Heart left ventricle (tissue), 16 donors: ENCODE measurements at regions of chr1 and their contacts with region 1.

Region 1: DNA sequence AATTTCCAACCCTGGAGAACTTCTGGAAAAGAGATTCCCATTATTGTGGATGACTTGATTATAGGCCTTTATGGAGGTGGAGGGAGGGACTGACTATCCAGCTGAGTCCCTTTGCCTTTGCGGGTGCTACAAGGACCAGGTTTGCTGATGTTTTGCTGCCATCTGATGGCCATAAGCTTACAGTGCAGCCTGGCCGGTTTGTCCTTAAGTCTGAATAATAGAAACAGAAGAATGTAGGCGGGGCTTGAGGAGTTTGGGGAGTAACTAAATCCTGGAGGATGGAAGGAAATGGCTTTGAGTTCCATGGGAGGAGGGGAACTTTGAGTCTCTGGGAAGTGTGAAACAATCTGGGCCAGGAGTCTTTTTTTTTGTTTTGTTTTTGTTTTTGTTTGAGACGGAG is 55.7 kb upstream of the CD1D start:
- DNase-seq: peak; percentile 80 to 89 (median 87)
- ATAC-seq: peak; percentile 93 to 98 (median 96)
- H3K4me3 ChIP-seq: peak overlapping the region in 1 of 12 donors; percentile 21
- H3K27ac ChIP-seq: no peak overlapping the region
- H3K4me1 ChIP-seq: peaks cover 0 to 4% (median 0%) of the 10 kb centered on the region in 12 donors
- H3K27me3 ChIP-seq: peaks cover 0 to 9% (median 0%) of the 10 kb centered on the region in 9 donors
- CTCF ChIP-seq: peak; percentile 83 to 98 (median 91)
- POLR2A ChIP-seq: no peak

Region 2: DNA sequence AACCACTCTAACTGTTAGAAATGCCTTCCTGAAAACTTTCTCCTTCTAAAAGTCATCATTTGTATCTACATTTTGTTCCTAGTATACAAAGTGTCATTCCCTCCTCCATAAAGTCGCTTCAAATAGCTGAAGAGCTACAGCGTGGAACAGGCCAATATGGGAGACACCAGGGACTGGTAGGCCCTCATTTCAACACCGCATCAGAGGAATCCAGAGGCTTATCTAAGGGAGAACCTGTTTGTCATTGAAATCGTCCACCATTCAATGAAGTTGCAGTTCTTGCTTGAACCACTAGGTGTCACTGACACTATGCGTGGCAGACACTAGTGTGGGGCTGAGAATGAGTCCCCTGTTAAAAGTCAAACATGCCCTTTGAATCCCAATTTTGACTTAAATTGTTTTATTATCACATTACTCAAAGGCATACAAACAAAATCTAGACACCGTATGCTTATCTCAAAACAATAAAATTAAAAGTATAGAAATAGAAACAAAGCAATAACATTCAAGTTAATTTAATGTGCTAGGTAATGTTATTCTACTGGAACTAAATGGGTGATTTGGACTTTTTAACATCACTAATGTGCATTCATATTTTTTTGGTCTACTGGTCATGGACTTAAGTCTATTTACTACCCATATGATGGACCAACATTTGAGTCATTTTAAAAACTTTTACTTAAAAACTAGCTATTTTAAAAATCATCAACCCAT is 755.0 kb before region 1 on chr1:
- intact Hi-C with region 1: loop called in 1 of 10 experiments (anchors 5 kb)
- DNase-seq: no peak
- ATAC-seq: peak in 2 of 4 donors; percentile 71 to 76
- H3K4me3 ChIP-seq: no peak overlapping the region
- H3K27ac ChIP-seq: no peak overlapping the region
- H3K4me1 ChIP-seq: no peaks in the 10 kb centered on the region
- H3K27me3 ChIP-seq: peaks cover 0 to 6% (median 0%) of the 10 kb centered on the region in 9 donors
- CTCF ChIP-seq: peak; percentile 80 to 94 (median 90)
- POLR2A ChIP-seq: no peak

Region 3: DNA sequence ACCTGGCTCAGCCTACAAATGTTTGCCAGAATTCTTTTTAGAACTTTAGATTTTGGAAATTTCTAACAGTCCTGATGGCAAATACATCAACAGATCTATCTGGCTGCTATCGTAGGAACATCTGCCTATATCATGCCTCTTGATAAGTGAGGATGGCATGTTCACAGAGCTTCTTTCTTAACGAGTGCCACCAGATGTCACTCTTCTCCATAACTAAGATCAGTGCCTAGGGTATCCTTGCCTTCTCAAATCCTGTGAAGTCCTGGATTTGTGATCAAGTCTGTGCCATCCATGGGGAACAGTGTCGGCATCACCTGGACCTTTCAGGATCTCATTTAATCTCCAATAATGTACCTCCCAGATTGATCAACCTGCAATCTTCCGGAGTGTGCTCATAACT is 246.9 kb before region 1 on chr1:
- intact Hi-C with region 1: loop called in 4 of 10 experiments (anchors 10 kb)
- DNase-seq: no peak
- ATAC-seq: peak in 2 of 4 donors; percentile 44 to 68
- H3K4me3 ChIP-seq: no peak overlapping the region
- H3K27ac ChIP-seq: no peak overlapping the region
- H3K4me1 ChIP-seq: peaks cover 0 to 15% (median 0%) of the 10 kb centered on the region in 12 donors
- H3K27me3 ChIP-seq: peaks cover 0 to 7% (median 0%) of the 10 kb centered on the region in 9 donors
- CTCF ChIP-seq: peak in 10 of 12 donors; percentile 33 to 56 (median 44)
- POLR2A ChIP-seq: no peak

Region 4: DNA sequence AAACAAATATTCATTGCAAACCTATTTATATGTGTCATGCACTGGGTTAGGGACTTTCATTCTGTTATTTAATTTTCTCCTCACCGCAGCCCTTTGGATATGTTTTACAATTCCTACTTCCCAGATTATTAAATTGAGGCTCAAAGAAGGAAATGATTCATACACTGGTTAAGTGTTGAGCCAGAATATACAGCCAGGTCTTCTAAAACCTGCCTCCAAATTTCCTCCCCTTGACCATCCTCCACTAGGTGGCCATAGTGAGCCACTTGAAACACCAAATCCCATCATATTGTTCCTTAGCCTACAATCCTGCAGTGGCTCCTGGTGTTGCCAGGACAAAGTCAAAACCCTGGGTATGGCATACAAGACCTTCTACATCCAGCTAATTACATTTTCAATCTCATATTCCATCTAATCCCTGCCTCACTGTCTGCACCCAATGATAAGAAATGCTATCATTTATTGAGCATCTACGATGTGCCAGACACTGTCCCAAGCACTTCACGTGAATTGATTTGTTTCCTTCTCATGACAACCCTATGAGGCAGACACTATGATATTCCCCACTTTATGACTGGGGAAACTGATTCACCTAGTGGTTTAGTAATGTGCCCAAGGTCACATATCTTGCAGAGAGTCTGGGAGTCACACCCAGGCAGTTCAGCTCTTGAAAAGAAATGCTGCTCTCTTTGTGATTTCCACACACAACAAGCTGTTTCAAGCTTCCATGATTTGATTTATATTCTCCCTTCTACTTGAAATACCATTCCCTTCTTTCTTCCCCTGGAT is 155.1 kb before region 1 on chr1:
- intact Hi-C with region 1: loop called in 4 of 10 experiments (anchors 2 to 5 kb)
- DNase-seq: peak in 4 of 5 donors; percentile 36 to 51 (median 39)
- ATAC-seq: peak; percentile 63 to 85 (median 76)
- H3K4me3 ChIP-seq: no peak overlapping the region
- H3K27ac ChIP-seq: peak overlapping the region in 2 of 12 donors; percentile 49 to 57
- H3K4me1 ChIP-seq: peaks cover 0 to 18% (median 8%) of the 10 kb centered on the region in 12 donors
- H3K27me3 ChIP-seq: no peaks in the 10 kb centered on the region
- CTCF ChIP-seq: peak; percentile 56 to 85 (median 74)
- POLR2A ChIP-seq: no peak

Region 5: GRCh38 chr1:157992031-157992832 is 132.8 kb before region 1 on chr1:
- intact Hi-C with region 1: loop called (anchors 1 to 10 kb)
- DNase-seq: peak; percentile 58 to 80 (median 73)
- ATAC-seq: peak; percentile 62 to 78 (median 72)
- H3K4me3 ChIP-seq: peak overlapping the region in 3 of 12 donors; percentile 6 to 98 (median 97)
- H3K27ac ChIP-seq: peak overlapping the region in 10 of 12 donors; percentile 40 to 95 (median 60)
- H3K4me1 ChIP-seq: peaks cover 0 to 29% (median 11%) of the 10 kb centered on the region in 12 donors
- H3K27me3 ChIP-seq: peaks cover 0 to 19% (median 0%) of the 10 kb centered on the region in 9 donors
- CTCF ChIP-seq: peak; percentile 85 to 98 (median 96)
- POLR2A ChIP-seq: no peak